ENCODE measurements at regions of chr6 and their contacts with region 1.

Region 1: DNA sequence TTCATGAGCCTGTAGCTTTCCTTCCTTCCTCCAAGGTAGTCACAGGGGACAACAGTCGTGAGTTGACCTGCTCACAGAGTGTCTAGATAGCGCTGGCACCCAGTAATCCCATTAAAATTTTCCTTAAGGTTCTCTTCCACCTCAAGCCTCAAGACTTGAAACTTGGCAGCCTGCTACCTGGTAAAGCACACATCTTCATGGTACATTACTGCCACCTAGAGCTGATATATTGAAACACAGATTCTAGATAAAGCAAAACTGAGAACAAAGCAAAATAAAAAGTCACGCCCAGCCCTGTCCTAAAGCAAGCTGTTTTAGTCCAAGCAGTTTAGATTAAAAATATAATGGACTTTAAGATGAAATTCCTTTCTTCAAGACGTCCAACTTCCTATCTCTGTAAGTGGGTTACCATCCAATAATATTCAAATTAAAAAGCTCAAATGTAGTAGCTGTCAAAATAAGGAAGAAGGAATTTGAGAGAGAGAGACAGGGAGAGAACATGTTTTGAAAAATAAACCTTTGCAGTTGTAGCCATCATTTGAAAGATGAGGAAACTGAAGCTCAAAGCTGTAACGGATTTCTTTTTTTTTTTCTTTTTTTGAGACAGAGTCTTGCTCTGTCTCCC is 50.7 kb upstream of the CD83 start:
- DNase-seq: no peak
- ATAC-seq: peak; percentile 56 to 78
- H3K4me3 ChIP-seq: no peak overlapping the region
- H3K27ac ChIP-seq: no peak overlapping the region
- H3K4me1 ChIP-seq: no peaks in the 10 kb centered on the region
- H3K27me3 ChIP-seq: peaks cover 0 to 10% (median 4%) of the 10 kb centered on the region in 3 donors
- CTCF ChIP-seq: peak; percentile 54 to 70 (median 62)
- POLR2A ChIP-seq: no peak

Region 2: GRCh38 chr6:13217206-13217905 is 849.5 kb before region 1 on chr6:
- in situ Hi-C with region 1: no loop called
- intact Hi-C with region 1: no loop called
- DNase-seq: no peak
- ATAC-seq: no peak
- H3K4me3 ChIP-seq: no peak overlapping the region
- H3K27ac ChIP-seq: no peak overlapping the region
- H3K4me1 ChIP-seq: no peaks in the 10 kb centered on the region
- H3K27me3 ChIP-seq: no peaks in the 10 kb centered on the region
- CTCF ChIP-seq: no peak
- POLR2A ChIP-seq: no peak

Region 3: DNA sequence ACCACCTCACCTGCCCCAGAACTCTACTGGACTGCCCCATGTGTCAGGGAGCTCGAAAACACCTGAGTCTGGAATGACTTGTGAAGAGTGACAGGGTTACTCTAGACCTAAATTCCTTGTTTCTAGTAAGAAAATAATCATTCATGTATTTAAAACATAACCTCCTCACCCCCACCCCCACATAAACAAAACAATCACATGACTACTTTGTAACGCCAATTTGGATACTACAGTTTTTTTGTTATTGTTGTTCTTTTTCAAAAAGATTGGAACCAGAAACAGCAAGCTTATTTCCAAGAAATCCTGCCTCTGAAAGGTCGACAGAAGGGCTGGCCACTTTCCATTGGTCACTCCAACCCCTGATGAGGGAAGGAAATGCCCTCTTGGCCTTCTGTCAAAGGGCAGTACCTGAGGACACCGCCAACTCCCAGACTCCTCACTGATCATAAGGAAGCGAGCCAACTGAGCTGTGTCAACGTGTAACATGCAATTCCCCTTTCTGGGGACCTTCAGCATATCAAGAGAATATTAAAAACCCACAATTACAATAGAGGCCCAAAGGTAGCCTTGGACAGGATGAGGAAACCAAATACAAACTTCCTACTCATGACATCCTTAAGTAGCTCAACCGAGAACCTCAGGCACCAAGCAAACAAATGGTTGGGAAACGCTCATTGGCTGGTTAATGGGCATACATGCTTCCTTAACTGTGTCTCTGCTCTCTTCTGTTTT is 255.1 kb before region 1 on chr6:
- in situ Hi-C with region 1: no loop called
- intact Hi-C with region 1: no loop called
- DNase-seq: peak in 1 of 2 donors; percentile 15
- ATAC-seq: no peak
- H3K4me3 ChIP-seq: no peak overlapping the region
- H3K27ac ChIP-seq: peak overlapping the region; percentile 92 to 99 (median 98)
- H3K4me1 ChIP-seq: peaks cover 30 to 31% of the 10 kb centered on the region in 2 donors
- H3K27me3 ChIP-seq: no peaks in the 10 kb centered on the region
- CTCF ChIP-seq: no peak
- POLR2A ChIP-seq: no peak

Region 4: GRCh38 chr6:13916230-13916944 is 150.5 kb before region 1 on chr6:
- in situ Hi-C with region 1: loop called in 1 of 4 experiments (anchors 10 kb)
- intact Hi-C with region 1: no loop called
- DNase-seq: no peak
- ATAC-seq: no peak
- H3K4me3 ChIP-seq: no peak overlapping the region
- H3K27ac ChIP-seq: no peak overlapping the region
- H3K4me1 ChIP-seq: peaks cover 4% of the 10 kb centered on the region in 2 donors
- H3K27me3 ChIP-seq: no peaks in the 10 kb centered on the region
- CTCF ChIP-seq: no peak
- POLR2A ChIP-seq: no peak